ENCODE measurements at regions of chr9 and their contacts with region 1.

Region 1: GRCh38 chr9:95875305-95876137 is at the start of gene ERCC6L2:
- DNase-seq: peak; percentile 99
- H3K4me3 ChIP-seq: peak within 1 kb of the TSS in 1 of 3 experiments; percentile 71
- H3K27ac ChIP-seq: no peak within 1 kb of the TSS
- H3K4me1 ChIP-seq: peaks cover 23% of the 10 kb centered on the region
- H3K27me3 ChIP-seq: no peaks in the 10 kb centered on the region
- CTCF ChIP-seq: peak in 1 of 2 donors; percentile 0
- POLR2A ChIP-seq: peak; percentile 86
- total RNA-seq, gene ERCC6L2: 29.6 and 31.8 TPM in 2 replicates

Region 2: GRCh38 chr9:95510709-95511615 is 364.6 kb before region 1 on chr9:
- CTCF ChIA-PET with region 1: interaction called, 4 read pairs
- POLR2A ChIA-PET with region 1: interaction called, 3 read pairs
- dilution Hi-C with region 1: no loop called
- intact Hi-C with region 1: loop called (anchors 1 kb)
- DNase-seq: peak; percentile 91
- H3K4me3 ChIP-seq: peak overlapping the region; percentile 74 to 98 (median 94)
- H3K27ac ChIP-seq: peak overlapping the region; percentile 83
- H3K4me1 ChIP-seq: peaks cover 28% of the 10 kb centered on the region
- H3K27me3 ChIP-seq: peaks cover 0 to 2% of the 10 kb centered on the region in 2 experiments
- CTCF ChIP-seq: no peak
- POLR2A ChIP-seq: peak; percentile 69

Region 3: DNA sequence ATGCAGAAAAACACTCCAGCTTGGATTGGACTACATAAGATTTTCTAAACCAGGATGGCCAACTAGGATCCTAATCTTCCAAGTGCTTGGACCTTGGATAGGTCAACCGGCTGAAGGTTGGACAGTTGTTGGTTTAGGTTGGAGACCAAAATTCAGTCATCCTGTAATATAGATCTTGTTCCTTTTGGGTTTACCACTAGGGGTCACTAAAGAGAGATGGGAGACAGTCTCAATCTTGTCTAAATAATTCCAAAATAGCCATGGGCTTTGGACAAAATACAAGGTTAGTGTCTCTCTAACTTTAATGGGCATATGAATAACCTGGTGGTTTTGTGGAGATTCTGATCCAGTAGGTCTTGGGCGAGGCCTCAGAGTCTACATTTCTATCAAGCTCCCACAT is 148.8 kb before region 1 on chr9:
- CTCF ChIA-PET with region 1: interaction called, 15 read pairs
- POLR2A ChIA-PET with region 1: interaction called, 7 read pairs
- dilution Hi-C with region 1: no loop called
- intact Hi-C with region 1: loop called (anchors 1 kb)
- DNase-seq: peak; percentile 57
- H3K4me3 ChIP-seq: no peak overlapping the region
- H3K27ac ChIP-seq: no peak overlapping the region
- H3K4me1 ChIP-seq: no peaks in the 10 kb centered on the region
- H3K27me3 ChIP-seq: no peaks in the 10 kb centered on the region
- CTCF ChIP-seq: peak; percentile 56 to 67
- POLR2A ChIP-seq: no peak

Region 4: DNA sequence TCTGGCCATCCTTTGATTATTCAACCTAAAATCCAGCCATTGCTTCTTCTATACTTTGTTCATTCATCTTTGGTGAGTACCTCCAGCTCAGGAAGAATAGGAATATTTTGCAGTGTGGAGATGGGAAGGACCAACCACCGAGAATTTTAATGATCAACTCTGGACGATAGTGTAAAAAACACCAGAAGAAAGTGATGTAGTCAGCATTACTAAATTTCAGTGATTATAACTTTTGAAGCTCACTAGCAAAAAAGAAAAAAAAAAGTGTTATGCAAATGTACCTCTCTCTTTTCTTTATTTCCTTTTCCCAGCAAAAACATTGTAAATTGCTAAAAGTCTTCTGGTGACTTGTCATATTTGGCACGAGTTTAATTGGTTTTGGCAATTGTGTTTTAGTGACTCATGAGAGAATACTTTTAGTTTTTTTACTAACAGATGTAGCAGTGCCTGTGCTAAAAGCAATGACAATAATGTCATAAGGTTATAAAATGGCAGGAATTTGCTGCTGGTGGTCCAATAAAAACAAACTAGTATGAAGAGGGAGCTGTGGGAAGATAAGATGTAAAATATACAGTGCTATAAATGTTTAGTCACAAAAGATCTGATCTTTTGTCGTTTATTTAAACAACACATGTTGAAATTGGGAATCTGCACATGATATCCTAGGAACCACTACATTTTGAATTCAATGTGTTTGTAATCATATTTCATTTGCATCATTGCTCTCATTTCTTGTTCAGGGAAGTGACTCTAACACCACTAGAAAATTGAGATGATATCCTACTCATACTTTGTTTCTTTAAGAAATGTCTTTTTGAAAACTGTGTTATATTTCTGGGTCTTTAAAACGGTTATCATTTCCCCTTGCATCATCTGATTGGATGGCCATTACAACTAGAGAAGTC is 81.3 kb before region 1 on chr9:
- CTCF ChIA-PET with region 1: no interaction called
- POLR2A ChIA-PET with region 1: no interaction called
- dilution Hi-C with region 1: no loop called
- intact Hi-C with region 1: loop called (anchors 1 kb)
- DNase-seq: peak; percentile 97
- H3K4me3 ChIP-seq: no peak overlapping the region
- H3K27ac ChIP-seq: peak overlapping the region; percentile 92
- H3K4me1 ChIP-seq: peaks cover 22% of the 10 kb centered on the region
- H3K27me3 ChIP-seq: no peaks in the 10 kb centered on the region
- CTCF ChIP-seq: no peak
- POLR2A ChIP-seq: peak; percentile 54

Region 5: GRCh38 chr9:95938724-95939123 is 63.2 kb after region 1 on chr9:
- CTCF ChIA-PET with region 1: no interaction called
- POLR2A ChIA-PET with region 1: no interaction called
- dilution Hi-C with region 1: no loop called
- intact Hi-C with region 1: loop called (anchors 5 kb)
- DNase-seq: no peak
- H3K4me3 ChIP-seq: no peak overlapping the region
- H3K27ac ChIP-seq: no peak overlapping the region
- H3K4me1 ChIP-seq: no peaks in the 10 kb centered on the region
- H3K27me3 ChIP-seq: no peaks in the 10 kb centered on the region
- CTCF ChIP-seq: no peak
- POLR2A ChIP-seq: no peak

Measured in endothelial cell of umbilical vein (primary cell).